Activated CD8-positive, alpha-beta memory T cell treated with anti-CD3 and anti-CD28 coated beads, Interleukin-2, amount 10 ng/mL, durations not matched to agents 7 days and 5 days (primary cell): ENCODE measurements at regions of chr9 and their contacts with region 1.

Region 1: DNA sequence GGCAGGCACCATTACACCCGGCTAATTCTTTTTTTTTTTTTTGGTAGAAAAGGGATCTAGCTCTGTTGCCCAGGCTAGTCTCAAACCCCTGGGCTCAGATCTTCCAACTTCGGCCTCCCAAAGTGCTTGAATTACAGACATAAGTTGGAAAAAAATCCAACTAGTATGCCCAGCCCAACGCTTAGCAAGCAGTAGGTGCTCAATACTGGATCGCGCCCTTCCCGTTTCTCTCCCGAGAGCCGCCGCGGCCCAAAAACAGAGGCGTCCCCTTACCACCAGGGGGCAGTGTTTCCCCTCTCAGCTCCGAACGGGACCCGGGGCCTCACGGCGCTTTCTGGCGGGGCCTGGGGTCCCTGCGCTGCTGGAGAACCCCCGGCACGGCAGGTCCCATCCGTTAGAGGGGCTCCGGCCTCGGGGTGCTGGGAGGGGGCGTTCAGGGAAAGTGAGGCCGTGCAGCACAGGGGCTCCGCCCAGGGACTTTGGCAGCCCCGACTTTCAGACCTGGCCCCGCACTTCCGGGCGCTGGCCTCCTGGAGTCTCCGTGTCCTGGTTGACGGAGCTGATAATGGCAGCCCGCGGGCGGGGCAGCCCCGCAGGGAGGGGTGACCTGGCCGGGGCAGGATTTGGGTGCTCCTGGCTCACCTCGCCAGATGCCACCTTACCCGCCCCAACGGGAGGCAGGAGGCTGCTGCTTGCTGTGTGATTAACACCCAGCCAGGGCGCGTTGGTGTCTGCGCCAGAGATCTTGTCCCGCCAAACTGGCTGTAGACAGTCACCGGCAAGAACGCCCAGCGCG is 15.2 kb downstream of the PTGES start:
- DNase-seq: peak; percentile 90
- ATAC-seq: peak; percentile 93
- H3K4me3 Mint-ChIP-seq: peak overlapping the region; percentile 67
- H3K27ac Mint-ChIP-seq: peak overlapping the region; percentile 59
- H3K4me1 Mint-ChIP-seq: peaks cover 8% of the 10 kb centered on the region
- H3K27me3 Mint-ChIP-seq: no peaks in the 10 kb centered on the region

Region 2: GRCh38 chr9:129726322-129727160 is 11.1 kb before region 1 on chr9:
- CTCF ChIA-PET with region 1: interaction called, 81 read pairs
- DNase-seq: peak; percentile 68
- ATAC-seq: peak; percentile 94
- H3K4me3 Mint-ChIP-seq: no peak overlapping the region
- H3K27ac Mint-ChIP-seq: no peak overlapping the region
- H3K4me1 Mint-ChIP-seq: peaks cover 2% of the 10 kb centered on the region
- H3K27me3 Mint-ChIP-seq: peaks cover 8% of the 10 kb centered on the region

Region 3: GRCh38 chr9:129757045-129757444 is 19.4 kb after region 1 on chr9:
- CTCF ChIA-PET with region 1: interaction called, 25 read pairs
- DNase-seq: no peak
- ATAC-seq: no peak
- H3K4me3 Mint-ChIP-seq: no peak overlapping the region
- H3K27ac Mint-ChIP-seq: no peak overlapping the region
- H3K4me1 Mint-ChIP-seq: peaks cover 11% of the 10 kb centered on the region
- H3K27me3 Mint-ChIP-seq: peaks cover 24% of the 10 kb centered on the region

Region 4: DNA sequence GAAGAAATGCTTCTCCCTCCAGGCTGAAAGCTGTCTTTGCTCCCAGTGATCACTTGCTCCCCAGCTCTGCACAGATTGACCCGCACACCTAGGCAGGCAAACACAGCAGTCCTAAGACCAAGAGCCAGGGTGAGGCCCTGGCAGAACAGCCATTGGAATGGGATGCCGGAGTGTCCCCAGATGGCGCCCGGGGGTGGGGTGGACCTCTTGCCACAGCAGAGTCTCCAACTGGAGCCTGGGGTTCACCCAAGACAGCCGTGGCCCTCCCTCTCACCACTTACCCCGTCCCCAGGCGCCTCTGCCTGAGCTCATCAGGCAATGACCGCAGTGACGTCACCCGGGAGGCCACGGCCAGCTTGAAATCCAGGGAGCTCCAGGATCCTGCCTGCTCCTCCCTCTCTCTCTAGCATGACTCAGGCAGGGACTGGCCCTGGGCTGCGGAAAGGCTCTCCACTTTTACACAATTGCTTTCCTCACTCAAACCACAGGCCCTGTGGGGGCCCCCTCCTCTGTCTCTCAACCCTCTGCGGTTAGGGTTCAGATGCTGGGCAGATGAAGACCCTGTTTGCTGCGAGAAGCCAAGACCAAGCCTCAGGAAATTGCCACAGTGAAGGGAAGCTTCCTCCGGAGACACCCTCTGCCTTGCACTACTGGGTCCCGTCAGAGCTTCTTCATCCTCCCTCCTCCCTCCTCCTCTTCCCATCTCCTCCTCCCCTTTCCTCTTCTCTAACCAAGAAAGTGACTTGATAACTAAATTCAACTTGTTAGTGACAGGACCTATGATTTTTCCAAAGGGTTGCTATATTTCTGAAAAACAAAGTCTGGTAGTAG is 39.5 kb after region 1 on chr9:
- CTCF ChIA-PET with region 1: interaction called, 184 read pairs
- DNase-seq: peak; percentile 72
- ATAC-seq: peak; percentile 75
- H3K4me3 Mint-ChIP-seq: no peak overlapping the region
- H3K27ac Mint-ChIP-seq: no peak overlapping the region
- H3K4me1 Mint-ChIP-seq: peaks cover 16% of the 10 kb centered on the region
- H3K27me3 Mint-ChIP-seq: peaks cover 14% of the 10 kb centered on the region

Region 5: GRCh38 chr9:129868916-129869486 is 131.3 kb after region 1 on chr9:
- CTCF ChIA-PET with region 1: no interaction called
- DNase-seq: peak; percentile 97
- ATAC-seq: peak; percentile 87
- H3K4me3 Mint-ChIP-seq: peak overlapping the region; percentile 52
- H3K27ac Mint-ChIP-seq: peak overlapping the region; percentile 94
- H3K4me1 Mint-ChIP-seq: peaks cover 84% of the 10 kb centered on the region
- H3K27me3 Mint-ChIP-seq: no peaks in the 10 kb centered on the region

Region 6: GRCh38 chr9:130039528-130040147 is 302.0 kb after region 1 on chr9:
- CTCF ChIA-PET with region 1: no interaction called
- DNase-seq: peak; percentile 48
- ATAC-seq: no peak
- H3K4me3 Mint-ChIP-seq: peak overlapping the region; percentile 98
- H3K27ac Mint-ChIP-seq: peak overlapping the region; percentile 97
- H3K4me1 Mint-ChIP-seq: peaks cover 59% of the 10 kb centered on the region
- H3K27me3 Mint-ChIP-seq: no peaks in the 10 kb centered on the region